ENCODE measurements at regions of chr17 and their contacts with region 1.

Region 1: GRCh38 chr17:42488032-42488431 is 29.4 kb downstream of the ATP6V0A1 start:
- DNase-seq: no peak
- ATAC-seq: no peak
- H3K4me3 ChIP-seq: no peak overlapping the region
- H3K27ac ChIP-seq: no peak overlapping the region
- H3K4me1 ChIP-seq: peaks cover 0 to 8% (median 0%) of the 10 kb centered on the region in 12 donors
- H3K27me3 ChIP-seq: no peaks in the 10 kb centered on the region
- CTCF ChIP-seq: no peak
- POLR2A ChIP-seq: no peak

Region 2: DNA sequence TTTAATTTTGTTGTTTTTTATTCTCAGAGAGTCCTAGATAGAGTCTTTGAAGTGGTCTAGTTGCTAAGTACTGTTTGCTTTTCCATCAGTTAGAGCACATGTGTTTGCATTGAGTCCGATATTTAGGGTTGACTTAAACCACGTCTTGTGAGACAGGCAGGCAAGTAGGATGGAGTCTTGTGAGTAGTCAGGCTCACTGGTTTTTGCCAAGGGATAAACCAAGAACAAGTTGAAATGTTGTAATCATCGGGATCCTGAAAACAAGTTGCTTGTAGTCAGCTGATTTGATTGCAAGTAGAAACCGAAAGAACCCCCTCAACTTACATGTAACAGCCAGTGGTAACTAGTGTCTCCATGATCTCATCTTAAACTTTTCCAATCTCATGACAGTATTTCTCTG is 12.2 kb before region 1 on chr17:
- intact Hi-C with region 1: loop called in 1 of 10 experiments (anchors 2 kb)
- DNase-seq: no peak
- ATAC-seq: peak in 2 of 4 donors; percentile 14 to 24
- H3K4me3 ChIP-seq: no peak overlapping the region
- H3K27ac ChIP-seq: peak overlapping the region in 3 of 12 donors; percentile 11 to 81 (median 14)
- H3K4me1 ChIP-seq: peaks cover 0 to 30% (median 0%) of the 10 kb centered on the region in 12 donors
- H3K27me3 ChIP-seq: no peaks in the 10 kb centered on the region
- CTCF ChIP-seq: no peak
- POLR2A ChIP-seq: no peak